ENCODE measurements at regions of chr3 and their contacts with region 1.

Region 1: GRCh38 chr3:58008140-58009025 is at the start of gene FLNB:
- DNase-seq: peak; percentile 48 to 95 (median 66)

Region 2: GRCh38 chr3:58177747-58178527 is 169.6 kb after region 1 on chr3:
- intact Hi-C with region 1: loop called (anchors 5 kb)
- DNase-seq: peak; percentile 77 to 98 (median 94)

Measured in posterior cingulate gyrus (tissue), 11 donors.